Naive thymus-derived CD4-positive, alpha-beta T cell (primary cell): ENCODE measurements at regions of chr1 and their contacts with region 1.

Region 1: DNA sequence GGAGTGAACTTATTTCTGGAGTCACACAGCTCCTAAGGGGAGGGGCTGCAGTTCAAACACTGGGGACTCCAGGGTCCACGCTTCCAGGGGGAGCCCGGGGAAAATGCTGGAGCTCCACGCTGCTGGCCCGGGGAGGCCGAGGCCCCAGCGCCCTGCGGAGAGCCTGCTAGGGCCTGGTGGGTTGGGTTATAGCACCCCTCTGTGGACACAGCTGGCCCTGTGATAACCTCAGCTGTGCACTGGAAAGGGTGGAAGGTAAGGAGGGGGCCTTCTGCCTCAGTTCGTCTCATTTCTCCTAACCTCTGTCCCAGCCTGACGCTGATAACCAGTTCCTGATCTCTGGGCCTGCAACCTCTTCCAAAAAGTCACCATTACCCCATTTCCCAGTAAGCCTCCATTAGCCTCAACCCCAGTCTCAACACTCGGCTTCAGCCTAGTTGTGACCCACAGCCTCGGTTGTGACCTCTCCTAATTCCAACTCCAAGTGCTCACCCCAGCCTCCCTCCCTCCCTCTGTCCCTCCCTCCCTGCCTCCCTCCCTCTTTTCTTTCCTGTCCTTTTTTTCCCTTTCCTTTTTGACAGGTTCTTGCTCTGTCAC is 7.1 kb downstream of the NBL1 start:
- DNase-seq: peak in 6 of 9 donors; percentile 40 to 55 (median 49)
- ATAC-seq: peak; percentile 60
- H3K4me3 ChIP-seq: no peak overlapping the region
- H3K4me3 Mint-ChIP-seq: no peak overlapping the region
- H3K27ac ChIP-seq: no peak overlapping the region
- H3K27ac Mint-ChIP-seq: peak overlapping the region in 4 of 9 donors; percentile 12 to 65 (median 43)
- H3K4me1 ChIP-seq: peaks cover 3 to 4% of the 10 kb centered on the region in 2 donors
- H3K4me1 Mint-ChIP-seq: peaks cover 10 to 31% (median 18%) of the 10 kb centered on the region in 7 donors
- H3K27me3 ChIP-seq: no peaks in the 10 kb centered on the region
- H3K27me3 Mint-ChIP-seq: peaks cover 0 to 11% (median 0%) of the 10 kb centered on the region in 5 donors

Region 2: DNA sequence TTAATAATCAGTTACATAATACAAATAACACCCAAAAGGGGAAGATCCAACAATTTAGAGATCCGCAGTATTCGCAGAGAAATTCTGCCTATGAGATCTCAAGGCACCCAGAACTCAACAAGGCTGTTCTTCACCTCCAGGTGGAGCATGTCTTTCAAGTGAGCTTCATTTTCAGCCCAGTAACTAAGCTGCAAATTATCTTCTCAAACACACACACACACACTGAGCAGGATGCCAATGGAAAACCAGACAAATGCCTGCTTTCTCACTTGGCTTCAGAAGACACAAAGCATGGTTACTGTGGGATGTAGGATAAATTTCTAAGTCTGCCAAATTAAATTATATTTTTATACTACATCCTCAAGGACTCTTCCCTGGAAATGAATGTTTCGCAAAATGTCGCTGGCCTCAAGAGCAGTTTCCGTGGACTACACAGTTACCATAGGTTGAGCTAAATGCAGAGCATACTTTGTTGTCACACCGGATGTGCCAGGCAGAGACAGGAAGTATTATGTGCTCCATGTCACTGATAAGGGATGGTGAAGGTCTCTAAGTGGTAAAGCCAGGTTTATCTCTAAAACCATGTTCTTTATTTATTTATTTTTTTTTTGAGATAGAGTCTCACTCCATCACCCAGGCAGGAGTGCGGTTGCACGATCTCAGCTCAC is 471.5 kb before region 1 on chr1:
- CTCF ChIA-PET with region 1: no interaction called
- POLR2A ChIA-PET with region 1: no interaction called
- intact Hi-C with region 1: loop called (anchors 1 to 10 kb)
- DNase-seq: peak in 7 of 9 donors; percentile 38 to 70 (median 49)
- ATAC-seq: peak; percentile 87
- H3K4me3 ChIP-seq: no peak overlapping the region
- H3K4me3 Mint-ChIP-seq: peak overlapping the region; percentile 16 to 64 (median 54)
- H3K27ac ChIP-seq: peak overlapping the region; percentile 45
- H3K27ac Mint-ChIP-seq: peak overlapping the region; percentile 75 to 95 (median 89)
- H3K4me1 ChIP-seq: peaks cover 0 to 19% of the 10 kb centered on the region in 2 donors
- H3K4me1 Mint-ChIP-seq: peaks cover 15 to 42% (median 31%) of the 10 kb centered on the region in 7 donors
- H3K27me3 ChIP-seq: no peaks in the 10 kb centered on the region
- H3K27me3 Mint-ChIP-seq: no peaks in the 10 kb centered on the region

Region 3: GRCh38 chr1:19240673-19241538 is 410.3 kb before region 1 on chr1:
- CTCF ChIA-PET with region 1: no interaction called
- POLR2A ChIA-PET with region 1: no interaction called
- intact Hi-C with region 1: loop called in 1 of 2 experiments (anchors 1 kb)
- DNase-seq: peak; percentile 36 to 79 (median 68)
- ATAC-seq: peak; percentile 100
- H3K4me3 ChIP-seq: no peak overlapping the region
- H3K4me3 Mint-ChIP-seq: no peak overlapping the region
- H3K27ac ChIP-seq: peak overlapping the region; percentile 36
- H3K27ac Mint-ChIP-seq: peak overlapping the region in 5 of 9 donors; percentile 28 to 62 (median 56)
- H3K4me1 ChIP-seq: no peaks in the 10 kb centered on the region
- H3K4me1 Mint-ChIP-seq: peaks cover 0 to 4% (median 0%) of the 10 kb centered on the region in 7 donors
- H3K27me3 ChIP-seq: no peaks in the 10 kb centered on the region
- H3K27me3 Mint-ChIP-seq: no peaks in the 10 kb centered on the region

Region 4: GRCh38 chr1:19341201-19342072 is 309.8 kb before region 1 on chr1:
- CTCF ChIA-PET with region 1: interaction called, 4 read pairs
- POLR2A ChIA-PET with region 1: no interaction called
- intact Hi-C with region 1: loop called (anchors 1 to 2 kb)
- DNase-seq: peak; percentile 56 to 79 (median 69)
- ATAC-seq: peak; percentile 90
- H3K4me3 ChIP-seq: no peak overlapping the region
- H3K4me3 Mint-ChIP-seq: no peak overlapping the region
- H3K27ac ChIP-seq: peak overlapping the region; percentile 31
- H3K27ac Mint-ChIP-seq: peak overlapping the region in 8 of 9 donors; percentile 5 to 93 (median 73)
- H3K4me1 ChIP-seq: no peaks in the 10 kb centered on the region
- H3K4me1 Mint-ChIP-seq: peaks cover 0 to 12% (median 7%) of the 10 kb centered on the region in 7 donors
- H3K27me3 ChIP-seq: no peaks in the 10 kb centered on the region
- H3K27me3 Mint-ChIP-seq: no peaks in the 10 kb centered on the region

Region 5: GRCh38 chr1:19439464-19440171 is 211.6 kb before region 1 on chr1:
- CTCF ChIA-PET with region 1: interaction called, 3 read pairs
- POLR2A ChIA-PET with region 1: interaction called, 3 read pairs
- intact Hi-C with region 1: loop called in 1 of 2 experiments (anchors 1 kb)
- DNase-seq: peak in 8 of 9 donors; percentile 22 to 64 (median 55)
- ATAC-seq: peak; percentile 60
- H3K4me3 ChIP-seq: no peak overlapping the region
- H3K4me3 Mint-ChIP-seq: peak overlapping the region; percentile 23 to 68 (median 46)
- H3K27ac ChIP-seq: peak overlapping the region; percentile 36
- H3K27ac Mint-ChIP-seq: peak overlapping the region; percentile 63 to 90 (median 75)
- H3K4me1 ChIP-seq: peaks cover 30 to 66% of the 10 kb centered on the region in 2 donors
- H3K4me1 Mint-ChIP-seq: peaks cover 64 to 98% (median 89%) of the 10 kb centered on the region in 7 donors
- H3K27me3 ChIP-seq: no peaks in the 10 kb centered on the region
- H3K27me3 Mint-ChIP-seq: no peaks in the 10 kb centered on the region

Region 6: GRCh38 chr1:19661721-19662228 is 10.5 kb after region 1 on chr1:
- CTCF ChIA-PET with region 1: interaction called, 10 read pairs
- POLR2A ChIA-PET with region 1: no interaction called
- intact Hi-C with region 1: no loop called
- DNase-seq: peak in 6 of 9 donors; percentile 35 to 66 (median 52)
- ATAC-seq: peak; percentile 63
- H3K4me3 ChIP-seq: no peak overlapping the region
- H3K4me3 Mint-ChIP-seq: peak overlapping the region in 2 of 10 donors; percentile 26 to 47
- H3K27ac ChIP-seq: no peak overlapping the region
- H3K27ac Mint-ChIP-seq: no peak overlapping the region
- H3K4me1 ChIP-seq: peaks cover 7 to 15% of the 10 kb centered on the region in 2 donors
- H3K4me1 Mint-ChIP-seq: peaks cover 12 to 37% (median 26%) of the 10 kb centered on the region in 7 donors
- H3K27me3 ChIP-seq: no peaks in the 10 kb centered on the region
- H3K27me3 Mint-ChIP-seq: peaks cover 0 to 34% (median 28%) of the 10 kb centered on the region in 5 donors